A549 (cell line): ENCODE measurements at regions of chr9 and their contacts with region 1.

Region 1: GRCh38 chr9:96163712-96164111 is 138.3 kb downstream of the HSD17B3 start:
- DNase-seq: no peak
- ATAC-seq: no peak
- H3K4me3 ChIP-seq: no peak overlapping the region
- H3K27ac ChIP-seq: peak overlapping the region; percentile 12 to 55; a peak in 4 of 6 replicates
- H3K4me1 ChIP-seq: peaks cover 11% of the 10 kb centered on the region
- CTCF ChIP-seq: no peak
- EP300 ChIP-seq: no peak
- POLR2A ChIP-seq: no peak
- RAD21 ChIP-seq: no peak

Region 2: DNA sequence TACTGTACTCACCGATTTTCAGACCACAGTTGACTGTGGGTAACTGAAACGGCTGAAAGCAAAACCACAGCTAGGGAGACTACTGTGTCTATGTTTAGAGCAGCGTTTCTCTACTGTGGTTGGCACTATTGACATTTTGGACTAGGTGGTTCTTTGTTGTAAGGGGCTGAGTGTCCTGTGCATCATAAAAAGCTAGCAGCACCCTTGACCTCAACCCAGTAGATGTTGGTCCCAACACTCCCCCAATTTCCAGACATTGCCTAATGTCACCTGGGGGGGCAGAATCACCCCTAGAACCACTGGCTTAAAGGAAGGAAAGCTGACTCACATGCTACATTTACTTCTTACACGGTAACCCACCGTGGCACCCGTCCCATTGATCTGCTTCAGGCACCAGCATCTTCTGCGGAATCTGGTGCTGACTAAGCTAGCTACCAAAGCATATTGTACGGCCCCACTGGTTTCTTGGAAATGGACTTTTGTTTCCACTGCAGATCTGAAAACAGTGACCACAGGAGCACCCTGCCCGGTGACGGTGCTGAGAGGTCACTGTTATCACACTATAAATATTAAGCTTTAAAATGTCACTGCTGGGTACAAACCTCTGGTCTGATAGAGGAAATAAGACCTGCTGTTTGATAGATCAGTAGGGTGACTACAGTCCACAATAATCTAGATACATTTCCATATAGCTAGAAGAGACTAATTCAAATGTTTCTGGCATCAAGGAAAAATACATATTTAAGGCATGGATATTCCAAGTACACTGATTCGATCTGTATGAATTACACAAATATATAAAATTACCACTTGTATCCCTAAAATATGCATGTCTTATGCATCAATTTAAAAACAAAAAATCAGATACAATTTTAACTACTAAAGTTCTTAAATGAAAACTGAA is 13.1 kb before region 1 on chr9:
- CTCF ChIA-PET with region 1: interaction called, 13 read pairs
- POLR2A ChIA-PET with region 1: no interaction called
- DNase-seq: no peak
- ATAC-seq: no peak
- H3K4me3 ChIP-seq: no peak overlapping the region
- H3K27ac ChIP-seq: no peak overlapping the region
- H3K4me1 ChIP-seq: no peaks in the 10 kb centered on the region
- CTCF ChIP-seq: no peak
- EP300 ChIP-seq: no peak
- POLR2A ChIP-seq: no peak
- RAD21 ChIP-seq: no peak